ENCODE measurements at regions of chr2 and their contacts with region 1.

Region 1: GRCh38 chr2:64488050-64488974 is 34.4 kb downstream of the LGALSL start:
- DNase-seq: peak; percentile 12
- ATAC-seq: peak; percentile 94
- H3K4me3 ChIP-seq: no peak overlapping the region
- H3K27ac ChIP-seq: no peak overlapping the region
- H3K4me1 ChIP-seq: peaks cover 5% of the 10 kb centered on the region
- H3K27me3 ChIP-seq: no peaks in the 10 kb centered on the region
- CTCF ChIP-seq: peak; percentile 84 to 92 (median 91)
- EP300 ChIP-seq: no peak
- POLR2A ChIP-seq: no peak
- RAD21 ChIP-seq: peak; percentile 90

Region 2: GRCh38 chr2:64338910-64339500 is 149.3 kb before region 1 on chr2:
- CTCF ChIA-PET with region 1: interaction called, 15 read pairs
- POLR2A ChIA-PET with region 1: no interaction called
- RAD21 ChIA-PET with region 1: interaction called, 3 read pairs
- SMC1A ChIA-PET with region 1: interaction called, 4 read pairs
- in situ Hi-C with region 1: loop called (anchors 5 kb)
- intact Hi-C with region 1: no loop called
- DNase-seq: no peak
- ATAC-seq: peak; percentile 88
- H3K4me3 ChIP-seq: no peak overlapping the region
- H3K27ac ChIP-seq: no peak overlapping the region
- H3K4me1 ChIP-seq: no peaks in the 10 kb centered on the region; the same call in 1 of the 2 replicates
- H3K27me3 ChIP-seq: no peaks in the 10 kb centered on the region
- CTCF ChIP-seq: no peak
- EP300 ChIP-seq: no peak
- POLR2A ChIP-seq: no peak
- RAD21 ChIP-seq: no peak

Region 3: DNA sequence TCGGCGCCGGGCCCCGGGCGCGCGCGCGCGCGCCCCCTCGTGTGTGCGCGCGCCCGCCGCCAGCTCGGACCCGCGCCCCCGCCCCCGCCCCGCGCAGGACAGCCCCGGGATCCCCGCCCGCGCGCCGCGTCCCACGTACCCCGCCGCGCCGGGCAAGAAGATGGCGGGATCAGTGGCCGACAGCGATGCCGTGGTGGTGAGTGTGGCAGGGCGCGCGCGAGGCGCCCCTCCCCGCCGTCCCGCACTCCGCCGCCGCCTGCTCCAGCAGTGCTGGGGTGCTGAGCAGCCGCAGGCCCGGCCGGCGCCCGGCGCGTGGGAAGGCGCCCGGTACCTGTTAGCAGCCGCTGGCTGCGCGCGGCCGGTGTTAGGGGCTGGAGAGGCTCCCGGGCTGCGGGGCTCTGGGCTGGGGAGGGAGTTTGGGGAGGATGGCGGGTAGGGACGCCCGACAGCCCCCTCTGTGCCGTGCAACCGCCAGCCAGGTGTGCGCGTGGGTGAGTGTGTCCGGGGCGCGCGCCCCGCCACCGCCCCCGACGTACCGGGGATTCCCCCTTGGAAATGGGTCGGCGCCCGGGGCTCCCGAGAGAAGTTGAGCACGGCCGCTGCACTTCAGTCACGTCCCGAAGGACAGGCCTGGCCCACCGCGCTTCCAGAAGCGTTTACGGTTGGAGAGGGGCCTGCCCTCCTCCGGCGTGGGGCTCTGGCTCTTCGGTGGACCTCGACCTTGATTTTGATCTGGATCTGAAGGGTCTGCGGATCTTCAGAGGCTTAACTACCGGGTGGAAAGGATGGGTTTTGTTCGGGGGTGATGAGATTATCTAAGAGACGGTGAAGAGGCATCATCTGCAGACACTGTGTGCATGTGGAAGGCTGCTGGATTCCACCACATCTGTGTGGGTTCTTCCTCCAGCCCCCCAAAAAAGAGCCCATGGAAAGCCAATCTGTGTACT is 33.7 kb before region 1 on chr2:
- CTCF ChIA-PET with region 1: interaction called, 17 read pairs
- POLR2A ChIA-PET with region 1: no interaction called
- RAD21 ChIA-PET with region 1: interaction called, 9 read pairs
- SMC1A ChIA-PET with region 1: interaction called, 21 read pairs
- in situ Hi-C with region 1: no loop called
- intact Hi-C with region 1: no loop called
- DNase-seq: no peak
- ATAC-seq: peak; percentile 66
- H3K4me3 ChIP-seq: peak overlapping the region; percentile 83
- H3K27ac ChIP-seq: peak overlapping the region; percentile 22; the same call in 1 of the 2 replicates
- H3K4me1 ChIP-seq: no peaks in the 10 kb centered on the region; the same call in 1 of the 2 replicates
- H3K27me3 ChIP-seq: no peaks in the 10 kb centered on the region
- CTCF ChIP-seq: no peak
- EP300 ChIP-seq: no peak
- POLR2A ChIP-seq: peak; percentile 60
- RAD21 ChIP-seq: no peak

Region 4: DNA sequence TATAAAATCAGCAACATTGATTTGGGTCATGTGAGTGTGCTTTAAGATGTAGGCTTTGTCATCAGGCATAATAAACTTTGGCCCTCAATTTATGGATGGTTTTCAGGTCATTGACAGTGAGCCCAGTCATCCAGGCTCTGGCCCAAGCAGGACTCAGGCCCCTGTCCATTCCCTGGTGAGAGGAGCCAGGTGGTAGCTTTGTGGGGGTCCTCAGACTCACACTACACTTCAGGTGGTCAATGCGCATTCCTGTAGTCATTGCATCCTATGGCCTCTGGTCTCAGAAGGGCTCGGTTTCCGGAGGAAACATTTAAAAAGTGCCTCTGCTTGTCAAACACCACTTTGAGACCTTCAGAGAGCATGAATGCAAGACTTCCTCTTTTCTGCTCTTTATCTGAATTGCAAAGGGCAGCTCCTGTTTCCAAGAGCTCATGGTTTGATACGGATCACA is 14.2 kb before region 1 on chr2:
- CTCF ChIA-PET with region 1: interaction called, 31 read pairs
- POLR2A ChIA-PET with region 1: interaction called, 3 read pairs
- RAD21 ChIA-PET with region 1: interaction called, 5 read pairs
- SMC1A ChIA-PET with region 1: interaction called, 6 read pairs
- in situ Hi-C with region 1: no loop called
- intact Hi-C with region 1: no loop called
- DNase-seq: no peak
- ATAC-seq: peak; percentile 79
- H3K4me3 ChIP-seq: no peak overlapping the region
- H3K27ac ChIP-seq: no peak overlapping the region
- H3K4me1 ChIP-seq: peaks cover 5% of the 10 kb centered on the region; the same call in 1 of the 2 replicates
- H3K27me3 ChIP-seq: no peaks in the 10 kb centered on the region
- CTCF ChIP-seq: no peak
- EP300 ChIP-seq: no peak
- POLR2A ChIP-seq: no peak
- RAD21 ChIP-seq: no peak

Region 5: DNA sequence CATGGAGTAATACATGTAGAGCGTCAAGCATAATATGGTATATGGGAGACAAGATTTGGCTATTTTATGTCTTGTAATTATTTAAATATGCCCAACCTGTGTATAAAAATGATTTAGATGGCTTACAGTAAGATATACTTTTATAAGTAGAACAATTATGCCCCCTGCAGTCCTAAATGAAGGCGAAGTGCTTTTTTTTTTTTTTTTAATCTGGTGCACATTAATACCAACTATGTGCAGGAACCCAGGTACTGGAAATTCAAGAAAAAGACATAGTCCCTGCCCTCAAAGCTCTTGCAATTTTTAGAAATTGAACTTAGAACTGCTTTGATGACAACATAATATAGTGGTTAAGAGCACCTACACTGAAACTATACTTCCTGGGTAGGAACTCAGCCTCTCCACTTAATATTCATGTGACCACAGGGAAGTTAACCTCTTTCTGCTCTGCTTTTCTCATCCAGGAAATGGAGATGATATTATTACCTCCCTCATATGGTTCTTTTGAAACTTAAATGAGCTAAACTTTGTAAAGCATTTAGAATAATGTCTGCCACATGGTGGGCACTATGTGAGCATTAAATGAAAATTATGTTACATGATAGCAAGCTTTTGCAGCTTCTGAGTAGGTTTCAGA is 74.0 kb after region 1 on chr2:
- CTCF ChIA-PET with region 1: interaction called, 14 read pairs
- POLR2A ChIA-PET with region 1: no interaction called
- RAD21 ChIA-PET with region 1: interaction called, 3 read pairs
- SMC1A ChIA-PET with region 1: interaction called, 6 read pairs
- in situ Hi-C with region 1: no loop called
- intact Hi-C with region 1: no loop called
- DNase-seq: no peak
- ATAC-seq: peak; percentile 70
- H3K4me3 ChIP-seq: no peak overlapping the region
- H3K27ac ChIP-seq: no peak overlapping the region
- H3K4me1 ChIP-seq: peaks cover 19% of the 10 kb centered on the region
- H3K27me3 ChIP-seq: no peaks in the 10 kb centered on the region
- CTCF ChIP-seq: peak; percentile 15 to 52 (median 39); a peak in 5 of 6 replicates
- EP300 ChIP-seq: no peak
- POLR2A ChIP-seq: no peak
- RAD21 ChIP-seq: peak; percentile 58

Measured in GM12878 (cell line).